ENCODE measurements at regions of chr10 and their contacts with region 1.

Region 1: DNA sequence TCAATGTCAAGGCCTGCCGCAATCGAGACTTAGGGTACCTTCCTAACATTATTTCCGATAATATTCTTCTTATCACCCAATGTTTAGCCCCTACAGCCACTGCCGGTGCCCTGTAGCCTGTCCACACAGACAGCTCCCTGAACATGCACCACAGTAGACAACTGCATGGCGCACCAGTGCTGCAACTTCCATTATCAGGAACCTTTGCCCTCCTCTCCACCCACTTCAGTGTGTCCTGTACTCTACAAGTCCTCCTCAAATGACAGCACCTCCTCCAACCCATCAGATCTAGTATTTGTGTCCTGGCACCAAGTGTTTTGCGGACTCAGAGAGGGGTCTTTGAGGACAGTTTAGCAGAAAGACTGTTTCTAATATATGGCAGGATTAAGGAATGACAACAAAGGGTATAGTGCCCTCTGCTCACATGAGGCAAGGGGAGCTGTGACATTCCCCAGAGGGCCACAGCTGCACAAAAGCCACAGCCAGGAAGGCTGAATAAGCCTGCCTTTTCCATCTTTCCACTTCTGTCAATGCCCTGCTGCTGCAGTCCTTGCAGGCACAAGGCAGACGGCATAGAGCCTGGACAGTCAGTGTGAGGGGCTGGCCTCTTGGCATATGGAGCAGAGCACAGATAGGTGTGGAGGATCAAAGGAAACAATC is 335.4 kb downstream of the PARD3 start:
- DNase-seq: peak; percentile 72 to 76
- H3K4me3 ChIP-seq: no peak overlapping the region
- H3K4me3 Mint-ChIP-seq: peak overlapping the region; percentile 25
- H3K27ac Mint-ChIP-seq: peak overlapping the region; percentile 58
- H3K4me1 ChIP-seq: peaks cover 48% of the 10 kb centered on the region
- H3K4me1 Mint-ChIP-seq: peaks cover 70% of the 10 kb centered on the region
- H3K27me3 ChIP-seq: no peaks in the 10 kb centered on the region
- H3K27me3 Mint-ChIP-seq: no peaks in the 10 kb centered on the region
- CTCF ChIP-seq: no peak

Region 2: GRCh38 chr10:34222359-34222758 is 257.3 kb before region 1 on chr10:
- CTCF ChIA-PET with region 1: no interaction called
- POLR2A ChIA-PET with region 1: no interaction called
- intact Hi-C with region 1: no loop called
- DNase-seq: no peak
- H3K4me3 ChIP-seq: no peak overlapping the region
- H3K4me3 Mint-ChIP-seq: no peak overlapping the region
- H3K27ac Mint-ChIP-seq: peak overlapping the region; percentile 5
- H3K4me1 ChIP-seq: peaks cover 33% of the 10 kb centered on the region
- H3K4me1 Mint-ChIP-seq: peaks cover 41% of the 10 kb centered on the region
- H3K27me3 ChIP-seq: no peaks in the 10 kb centered on the region
- H3K27me3 Mint-ChIP-seq: no peaks in the 10 kb centered on the region
- CTCF ChIP-seq: peak in 1 of 2 experiments; percentile 45

Region 3: GRCh38 chr10:34427911-34428216 is 51.8 kb before region 1 on chr10:
- CTCF ChIA-PET with region 1: interaction called, 3 read pairs
- POLR2A ChIA-PET with region 1: no interaction called
- intact Hi-C with region 1: loop called (anchors 1 kb)
- DNase-seq: no peak
- H3K4me3 ChIP-seq: no peak overlapping the region
- H3K4me3 Mint-ChIP-seq: peak overlapping the region; percentile 43
- H3K27ac Mint-ChIP-seq: peak overlapping the region; percentile 83
- H3K4me1 ChIP-seq: peaks cover 30% of the 10 kb centered on the region
- H3K4me1 Mint-ChIP-seq: peaks cover 44% of the 10 kb centered on the region
- H3K27me3 ChIP-seq: no peaks in the 10 kb centered on the region
- H3K27me3 Mint-ChIP-seq: no peaks in the 10 kb centered on the region
- CTCF ChIP-seq: no peak

Region 4: DNA sequence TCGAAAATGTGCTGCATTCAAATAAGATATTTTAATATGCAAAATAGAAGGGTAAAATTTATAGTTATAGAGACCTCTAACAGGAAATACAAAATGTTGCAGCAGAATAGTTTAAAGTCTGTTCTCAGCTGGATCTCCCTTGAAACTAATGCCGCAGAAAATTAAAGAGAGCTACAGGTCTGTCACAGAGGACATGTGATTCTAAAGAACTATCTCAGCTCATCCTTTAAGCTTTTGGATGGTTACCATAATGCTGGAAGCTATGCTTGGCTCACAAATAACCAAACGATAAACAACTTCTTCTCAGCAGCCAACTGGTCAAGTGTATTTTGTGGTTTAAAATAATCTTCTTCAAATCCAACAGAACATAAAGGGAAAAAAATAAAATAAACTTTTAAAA is 17.6 kb before region 1 on chr10:
- CTCF ChIA-PET with region 1: no interaction called
- POLR2A ChIA-PET with region 1: interaction called, 14 read pairs
- intact Hi-C with region 1: loop called (anchors 1 kb)
- DNase-seq: no peak
- H3K4me3 ChIP-seq: no peak overlapping the region
- H3K4me3 Mint-ChIP-seq: no peak overlapping the region
- H3K27ac Mint-ChIP-seq: no peak overlapping the region
- H3K4me1 ChIP-seq: no peaks in the 10 kb centered on the region
- H3K4me1 Mint-ChIP-seq: no peaks in the 10 kb centered on the region
- H3K27me3 ChIP-seq: no peaks in the 10 kb centered on the region
- H3K27me3 Mint-ChIP-seq: no peaks in the 10 kb centered on the region
- CTCF ChIP-seq: no peak

Region 5: DNA sequence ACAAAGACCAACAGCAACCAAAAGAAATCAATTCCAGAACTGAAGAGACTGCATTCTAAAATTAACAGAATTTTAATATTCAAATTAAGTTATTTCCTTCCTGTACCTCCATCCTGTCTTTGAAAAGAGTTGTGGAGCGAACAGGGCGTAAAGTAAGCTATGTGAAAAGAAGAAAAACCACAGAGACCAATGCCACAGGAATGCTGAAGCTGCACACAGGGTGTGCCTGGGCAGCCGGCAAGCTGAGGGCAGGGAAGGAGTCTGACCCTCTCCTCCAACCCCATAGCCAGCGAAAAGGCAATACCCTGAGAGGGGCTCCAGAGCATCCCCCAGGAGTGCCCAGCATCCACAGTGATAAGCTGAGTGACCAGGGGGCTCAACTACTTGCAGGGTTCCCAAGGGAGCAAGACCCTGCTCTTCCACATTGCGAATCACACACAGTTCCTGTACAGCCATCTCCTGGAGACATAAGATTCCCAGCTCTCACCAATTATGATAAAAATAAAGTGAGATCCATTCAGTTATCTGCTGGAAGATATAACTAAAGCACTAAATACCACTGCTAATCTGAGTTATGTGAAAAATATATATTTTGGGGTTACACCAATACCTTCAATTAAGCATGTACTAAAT is 241.7 kb after region 1 on chr10:
- CTCF ChIA-PET with region 1: no interaction called
- POLR2A ChIA-PET with region 1: no interaction called
- intact Hi-C with region 1: no loop called
- DNase-seq: no peak
- H3K4me3 ChIP-seq: no peak overlapping the region
- H3K4me3 Mint-ChIP-seq: no peak overlapping the region
- H3K27ac Mint-ChIP-seq: peak overlapping the region; percentile 15
- H3K4me1 ChIP-seq: peaks cover 13% of the 10 kb centered on the region; the same call in 1 of the 2 replicates
- H3K4me1 Mint-ChIP-seq: peaks cover 20% of the 10 kb centered on the region
- H3K27me3 ChIP-seq: no peaks in the 10 kb centered on the region
- H3K27me3 Mint-ChIP-seq: no peaks in the 10 kb centered on the region
- CTCF ChIP-seq: no peak

Measured in Caco-2 (cell line).